CD4-positive, alpha-beta T cell (primary cell): ENCODE measurements at regions of chr2 and their contacts with region 1.

Region 1: DNA sequence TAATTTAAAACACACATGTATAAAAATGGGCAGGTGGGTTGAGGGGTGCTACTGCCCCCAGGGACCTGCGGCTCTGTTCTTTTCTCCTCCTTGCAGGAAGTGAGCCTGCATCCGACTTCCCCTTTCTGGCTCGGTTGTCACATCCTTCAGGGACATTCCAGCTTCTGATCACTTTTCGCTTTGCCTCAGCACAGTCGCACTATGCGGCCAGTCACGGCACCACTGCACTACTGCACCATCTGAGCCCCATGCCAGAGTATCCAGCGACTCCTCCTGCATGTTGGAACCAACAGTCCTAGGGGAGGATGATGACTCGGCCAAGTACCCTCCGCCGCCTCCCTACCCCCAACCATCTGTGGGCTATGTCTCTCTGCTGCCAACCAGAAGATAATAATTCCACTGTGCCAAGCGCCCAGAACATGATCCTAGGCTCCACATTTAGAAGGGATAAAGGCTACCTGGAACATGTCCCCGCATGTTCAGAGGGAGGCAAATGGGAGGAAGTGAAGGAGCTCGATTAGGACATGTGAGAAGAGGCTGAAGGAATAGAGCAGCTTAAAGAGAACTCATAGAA is 17.6 kb downstream of the CDC42EP3 start:
- DNase-seq: peak in 3 of 14 experiments; percentile 49 to 77 (median 72)
- ATAC-seq: peak; percentile 17
- H3K4me3 ChIP-seq: no peak overlapping the region
- H3K4me3 Mint-ChIP-seq: peak overlapping the region; percentile 71
- H3K27ac ChIP-seq: peak overlapping the region in 1 of 2 donors; percentile 55
- H3K27ac Mint-ChIP-seq: peak overlapping the region; percentile 81
- H3K4me1 ChIP-seq: peaks cover 89% of the 10 kb centered on the region
- H3K4me1 Mint-ChIP-seq: peaks cover 93% of the 10 kb centered on the region
- H3K27me3 ChIP-seq: no peaks in the 10 kb centered on the region
- H3K27me3 Mint-ChIP-seq: no peaks in the 10 kb centered on the region
- CTCF ChIP-seq: no peak

Region 2: DNA sequence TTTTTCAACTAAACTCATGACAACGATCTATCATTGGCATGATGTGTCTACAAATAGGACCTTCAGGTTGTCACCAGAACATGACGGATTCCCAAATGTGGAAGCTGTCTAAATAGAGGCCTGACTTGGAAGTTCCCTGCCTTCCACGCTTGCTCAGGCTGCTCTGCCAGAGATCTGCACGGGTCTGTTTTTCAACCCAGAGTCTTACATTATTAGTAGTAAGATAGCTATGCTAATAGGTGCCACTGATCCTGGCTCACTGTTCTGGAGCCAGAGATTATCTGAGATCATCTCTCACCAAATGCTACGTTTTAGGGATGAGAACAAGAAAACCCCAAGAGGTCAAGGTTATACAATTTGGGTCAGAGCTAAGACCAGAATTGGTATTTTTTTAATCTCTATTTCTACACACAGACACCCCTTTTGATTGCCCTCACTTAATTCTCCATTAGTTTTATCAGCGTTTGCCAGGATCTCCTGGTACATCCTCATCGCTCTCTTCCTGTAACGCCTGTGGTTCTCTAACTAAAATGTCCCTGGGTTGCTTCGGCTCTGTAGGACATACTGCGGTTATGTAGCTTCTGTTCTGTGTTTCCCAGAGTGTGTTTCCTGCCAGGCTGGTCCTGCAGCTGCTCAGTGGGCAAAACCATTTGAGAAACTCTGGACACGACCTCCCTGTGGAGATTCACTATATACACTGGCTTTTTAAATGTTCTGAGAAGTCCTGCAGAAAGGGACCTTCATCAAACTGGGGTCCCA is 11.9 kb after region 1 on chr2:
- CTCF ChIA-PET with region 1: interaction called, 7 read pairs
- POLR2A ChIA-PET with region 1: interaction called, 43 read pairs
- intact Hi-C with region 1: loop called (anchors 2 kb)
- DNase-seq: peak in 1 of 14 experiments; percentile 41
- ATAC-seq: no peak
- H3K4me3 ChIP-seq: no peak overlapping the region
- H3K4me3 Mint-ChIP-seq: peak overlapping the region; percentile 36
- H3K27ac ChIP-seq: no peak overlapping the region
- H3K27ac Mint-ChIP-seq: peak overlapping the region; percentile 60
- H3K4me1 ChIP-seq: peaks cover 79% of the 10 kb centered on the region
- H3K4me1 Mint-ChIP-seq: peaks cover 96% of the 10 kb centered on the region
- H3K27me3 ChIP-seq: no peaks in the 10 kb centered on the region
- H3K27me3 Mint-ChIP-seq: no peaks in the 10 kb centered on the region
- CTCF ChIP-seq: no peak